Naive thymus-derived CD4-positive, alpha-beta T cell (primary cell): ENCODE measurements at regions of chr10 and their contacts with region 1.

Region 1: GRCh38 chr10:87817609-87818504 is at the start of gene ATAD1:
- DNase-seq: peak; percentile 79 to 93 (median 91)
- ATAC-seq: peak; percentile 92
- H3K4me3 ChIP-seq: peak within 1 kb of the TSS; percentile 75
- H3K4me3 Mint-ChIP-seq: peak within 1 kb of the TSS; percentile 90 to 100 (median 94)
- H3K27ac ChIP-seq: peak within 1 kb of the TSS; percentile 89
- H3K27ac Mint-ChIP-seq: peak within 1 kb of the TSS; percentile 93 to 100 (median 98)
- H3K4me1 ChIP-seq: peaks cover 13 to 33% of the 10 kb centered on the region in 2 donors
- H3K4me1 Mint-ChIP-seq: peaks cover 22 to 56% (median 41%) of the 10 kb centered on the region in 7 donors
- H3K27me3 ChIP-seq: no peaks in the 10 kb centered on the region
- H3K27me3 Mint-ChIP-seq: peaks cover 0 to 2% (median 0%) of the 10 kb centered on the region in 5 donors
- total RNA-seq, gene ATAD1: 33.5 to 53.4 (median 46.1) TPM

Region 2: GRCh38 chr10:87094373-87095235 is 723.3 kb before region 1 on chr10 and contains the starts of genes GLUD1 and SHLD2:
- CTCF ChIA-PET with region 1: no interaction called
- POLR2A ChIA-PET with region 1: no interaction called
- intact Hi-C with region 1: loop called in 1 of 2 experiments (anchors 1 kb)
- DNase-seq: peak; percentile 78 to 94 (median 84)
- ATAC-seq: peak; percentile 81
- H3K4me3 ChIP-seq: peak within 1 kb of the TSS; percentile 74
- H3K4me3 Mint-ChIP-seq: peak within 1 kb of the TSS; percentile 89 to 97 (median 94)
- H3K27ac ChIP-seq: peak within 1 kb of the TSS; percentile 88
- H3K27ac Mint-ChIP-seq: peak within 1 kb of the TSS; percentile 89 to 97 (median 94)
- H3K4me1 ChIP-seq: peaks cover 12 to 27% of the 10 kb centered on the region in 2 donors
- H3K4me1 Mint-ChIP-seq: peaks cover 38 to 65% (median 52%) of the 10 kb centered on the region in 7 donors
- H3K27me3 ChIP-seq: no peaks in the 10 kb centered on the region
- H3K27me3 Mint-ChIP-seq: no peaks in the 10 kb centered on the region
- total RNA-seq, gene GLUD1: 70.2 to 98.1 (median 73.2) TPM
- total RNA-seq, gene SHLD2: 19.3 to 31.4 (median 21.1) TPM

Region 3: DNA sequence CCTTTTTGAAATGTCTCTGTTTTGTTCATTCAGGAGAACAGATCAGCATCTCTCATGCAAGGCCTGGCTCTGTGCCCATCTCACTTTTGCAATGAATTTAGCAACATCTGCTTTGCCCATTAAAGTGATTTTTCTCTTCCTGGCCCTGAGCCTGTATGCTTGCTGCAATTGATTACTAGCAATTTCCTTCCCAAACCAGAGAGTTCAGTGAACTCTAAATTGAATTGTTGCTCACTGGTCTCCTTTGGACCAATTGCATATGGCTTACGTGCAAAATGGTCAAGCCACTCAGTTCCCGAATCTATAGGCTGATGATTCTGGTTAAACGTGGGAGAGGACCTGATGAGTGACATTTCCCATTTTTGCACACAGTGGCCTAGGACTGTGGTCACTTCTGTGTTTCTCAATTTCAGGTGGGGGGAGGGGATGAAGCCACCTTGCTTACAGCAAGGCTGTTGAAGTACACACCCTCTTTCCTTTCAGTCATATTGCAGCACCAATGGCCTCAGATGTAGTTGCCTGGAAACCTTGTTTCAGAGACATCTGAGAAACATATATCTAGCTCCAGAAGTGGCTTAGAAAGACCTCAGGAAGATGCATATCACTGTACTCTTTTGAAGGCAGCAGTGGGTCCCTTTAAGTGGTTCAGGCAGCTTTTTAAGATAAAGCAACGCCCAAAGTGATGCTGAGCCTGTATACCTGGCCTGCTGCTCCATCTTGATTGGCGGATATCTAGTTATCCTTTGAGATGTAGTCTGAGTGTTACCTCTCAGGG is 246.9 kb after region 1 on chr10:
- CTCF ChIA-PET with region 1: interaction called, 3 read pairs
- POLR2A ChIA-PET with region 1: interaction called, 7 read pairs
- intact Hi-C with region 1: loop called in 1 of 2 experiments (anchors 2 kb)
- DNase-seq: peak in 7 of 9 donors; percentile 72 to 93 (median 87)
- ATAC-seq: peak; percentile 92
- H3K4me3 ChIP-seq: no peak overlapping the region
- H3K4me3 Mint-ChIP-seq: peak overlapping the region; percentile 14 to 77 (median 66)
- H3K27ac ChIP-seq: peak overlapping the region; percentile 67
- H3K27ac Mint-ChIP-seq: peak overlapping the region; percentile 26 to 99 (median 95)
- H3K4me1 ChIP-seq: peaks cover 6 to 77% of the 10 kb centered on the region in 2 donors
- H3K4me1 Mint-ChIP-seq: peaks cover 0 to 83% (median 65%) of the 10 kb centered on the region in 7 donors
- H3K27me3 ChIP-seq: no peaks in the 10 kb centered on the region
- H3K27me3 Mint-ChIP-seq: peaks cover 0 to 4% (median 0%) of the 10 kb centered on the region in 5 donors

Region 4: GRCh38 chr10:88553116-88553752 is 735.4 kb after region 1 on chr10:
- CTCF ChIA-PET with region 1: no interaction called
- POLR2A ChIA-PET with region 1: no interaction called
- intact Hi-C with region 1: loop called in 1 of 2 experiments (anchors 1 kb)
- DNase-seq: peak in 7 of 9 donors; percentile 26 to 59 (median 53)
- ATAC-seq: peak; percentile 89
- H3K4me3 ChIP-seq: no peak overlapping the region
- H3K4me3 Mint-ChIP-seq: no peak overlapping the region
- H3K27ac ChIP-seq: no peak overlapping the region
- H3K27ac Mint-ChIP-seq: no peak overlapping the region
- H3K4me1 ChIP-seq: no peaks in the 10 kb centered on the region
- H3K4me1 Mint-ChIP-seq: peaks cover 0 to 2% (median 0%) of the 10 kb centered on the region in 7 donors
- H3K27me3 ChIP-seq: no peaks in the 10 kb centered on the region
- H3K27me3 Mint-ChIP-seq: peaks cover 0 to 11% (median 0%) of the 10 kb centered on the region in 5 donors

Region 5: DNA sequence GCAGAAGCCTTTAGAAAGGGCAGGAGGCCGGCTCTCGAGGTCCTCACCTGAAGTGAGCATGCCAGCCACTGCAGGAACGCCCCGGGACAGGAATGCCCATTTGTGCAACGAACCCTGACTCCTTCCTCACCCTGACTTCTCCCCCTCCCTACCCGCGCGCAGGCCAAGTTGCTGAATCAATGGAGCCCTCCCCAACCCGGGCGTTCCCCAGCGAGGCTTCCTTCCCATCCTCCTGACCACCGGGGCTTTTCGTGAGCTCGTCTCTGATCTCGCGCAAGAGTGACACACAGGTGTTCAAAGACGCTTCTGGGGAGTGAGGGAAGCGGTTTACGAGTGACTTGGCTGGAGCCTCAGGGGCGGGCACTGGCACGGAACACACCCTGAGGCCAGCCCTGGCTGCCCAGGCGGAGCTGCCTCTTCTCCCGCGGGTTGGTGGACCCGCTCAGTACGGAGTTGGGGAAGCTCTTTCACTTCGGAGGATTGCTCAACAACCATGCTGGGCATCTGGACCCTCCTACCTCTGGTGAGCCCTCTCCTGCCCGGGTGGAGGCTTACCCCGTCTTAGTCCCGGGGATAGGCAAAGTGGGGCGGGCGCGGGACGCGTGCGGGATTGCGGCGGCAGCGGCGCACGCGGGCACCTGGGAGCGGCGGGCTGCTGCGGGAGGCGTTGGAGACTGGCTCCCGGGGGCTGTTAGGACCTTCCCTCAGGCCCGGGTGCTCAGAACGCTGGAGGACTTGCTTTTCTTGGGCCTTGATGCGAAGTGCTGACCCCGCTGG is 1172.7 kb after region 1 on chr10 and contains the start of gene FAS:
- CTCF ChIA-PET with region 1: no interaction called
- POLR2A ChIA-PET with region 1: interaction called, 5 read pairs
- intact Hi-C with region 1: loop called in 1 of 2 experiments (anchors 10 kb)
- DNase-seq: peak; percentile 50 to 81 (median 61)
- ATAC-seq: peak; percentile 86
- H3K4me3 ChIP-seq: peak within 1 kb of the TSS; percentile 86
- H3K4me3 Mint-ChIP-seq: peak within 1 kb of the TSS; percentile 92 to 100 (median 96)
- H3K27ac ChIP-seq: peak within 1 kb of the TSS; percentile 77
- H3K27ac Mint-ChIP-seq: peak within 1 kb of the TSS; percentile 91 to 96 (median 94)
- H3K4me1 ChIP-seq: peaks cover 42 to 45% of the 10 kb centered on the region in 2 donors
- H3K4me1 Mint-ChIP-seq: peaks cover 41 to 83% (median 68%) of the 10 kb centered on the region in 7 donors
- H3K27me3 ChIP-seq: no peaks in the 10 kb centered on the region
- H3K27me3 Mint-ChIP-seq: no peaks in the 10 kb centered on the region
- total RNA-seq, gene FAS: 5.6 to 67.4 (median 8.3) TPM

Region 6: DNA sequence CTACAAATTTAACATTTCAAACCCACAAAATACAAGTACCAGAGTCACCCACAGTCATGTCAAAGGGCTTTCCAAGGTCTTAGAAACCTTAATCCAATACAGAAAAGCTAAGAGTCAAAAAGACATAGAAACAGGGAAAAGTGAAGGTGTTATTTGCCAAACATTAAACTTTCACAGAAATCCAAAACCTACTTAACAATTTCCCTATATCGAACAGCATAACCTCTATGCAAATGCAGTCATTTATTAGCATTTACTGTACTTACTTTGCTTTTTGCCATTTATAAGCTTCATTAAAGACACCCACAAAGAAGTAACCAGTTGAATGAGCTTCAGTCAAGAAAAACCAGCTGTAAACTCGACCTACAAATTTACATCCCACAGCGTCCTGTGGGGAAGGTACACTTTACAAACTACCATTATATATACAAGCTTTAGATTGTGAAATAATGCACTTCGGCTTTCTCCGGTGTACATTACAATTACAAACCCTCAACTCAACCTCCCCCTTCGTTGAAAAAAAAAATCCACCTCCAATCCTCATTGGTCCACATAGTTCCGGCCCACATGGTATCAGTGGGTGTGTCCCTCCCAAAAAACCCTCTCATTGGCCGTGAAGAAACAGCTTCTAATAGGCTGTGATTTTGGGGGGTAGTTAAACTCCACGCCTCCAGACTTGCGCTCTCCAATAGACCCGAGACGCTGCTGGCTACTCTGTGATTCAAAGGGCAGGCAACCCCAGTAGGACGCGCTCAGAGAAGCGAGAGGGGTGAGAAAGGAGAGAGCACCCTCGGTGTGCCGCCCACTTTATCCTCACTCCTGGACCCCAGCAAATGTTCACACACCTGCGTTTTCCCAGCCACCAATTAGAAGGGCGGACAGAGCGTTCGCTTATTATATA is 1825.8 kb after region 1 on chr10:
- CTCF ChIA-PET with region 1: no interaction called
- POLR2A ChIA-PET with region 1: no interaction called
- intact Hi-C with region 1: loop called in 1 of 2 experiments (anchors 5 kb)
- DNase-seq: peak; percentile 22 to 78 (median 68)
- ATAC-seq: peak; percentile 94
- H3K4me3 ChIP-seq: peak overlapping the region; percentile 76
- H3K4me3 Mint-ChIP-seq: no peak overlapping the region
- H3K27ac ChIP-seq: peak overlapping the region; percentile 55
- H3K27ac Mint-ChIP-seq: peak overlapping the region in 2 of 9 donors; percentile 4 to 72
- H3K4me1 ChIP-seq: peaks cover 0 to 6% of the 10 kb centered on the region in 2 donors
- H3K4me1 Mint-ChIP-seq: peaks cover 6 to 13% (median 8%) of the 10 kb centered on the region in 7 donors
- H3K27me3 ChIP-seq: no peaks in the 10 kb centered on the region
- H3K27me3 Mint-ChIP-seq: peaks cover 0 to 23% (median 6%) of the 10 kb centered on the region in 5 donors